ENCODE measurements at regions of chr15 and their contacts with region 1.

Region 1: DNA sequence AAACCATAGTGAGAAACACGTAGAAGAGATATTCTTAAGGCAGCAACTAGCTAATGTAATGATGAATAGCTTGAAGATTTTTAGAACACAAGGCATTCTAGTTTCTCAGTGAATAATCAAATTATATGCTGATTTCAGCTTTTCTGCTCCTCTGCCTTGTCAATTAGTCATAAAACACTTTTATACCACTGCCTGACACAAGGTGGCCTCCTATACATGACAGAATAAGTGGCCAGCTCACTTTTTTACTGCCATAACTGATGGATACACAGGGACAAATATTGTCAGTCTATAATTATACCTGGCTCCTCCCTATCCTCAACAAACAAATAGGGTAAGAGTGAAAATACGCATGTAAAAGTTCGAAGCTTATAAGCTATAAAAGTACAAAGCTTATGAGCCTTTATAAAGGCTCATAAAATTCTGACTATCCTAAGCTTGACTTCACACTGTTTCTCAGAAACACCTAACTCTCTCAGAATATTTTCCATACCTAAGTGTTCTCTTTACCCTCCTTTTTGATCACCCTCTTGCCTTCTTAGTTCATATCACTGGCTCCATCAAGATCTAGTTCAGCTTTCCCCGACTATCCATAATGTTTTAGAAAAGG is 81.6 kb downstream of the HERC1 start:
- DNase-seq: peak; percentile 25 to 41 (median 29)
- H3K4me3 ChIP-seq: no peak overlapping the region
- H3K4me3 Mint-ChIP-seq: no peak overlapping the region
- H3K27ac ChIP-seq: no peak overlapping the region
- H3K27ac Mint-ChIP-seq: peak overlapping the region in 1 of 7 donors; percentile 47
- H3K4me1 ChIP-seq: no peaks in the 10 kb centered on the region
- H3K4me1 Mint-ChIP-seq: no peaks in the 10 kb centered on the region
- H3K27me3 ChIP-seq: no peaks in the 10 kb centered on the region
- H3K27me3 Mint-ChIP-seq: peaks cover 0 to under 1% (median 0%) of the 10 kb centered on the region in 3 donors
- CTCF ChIP-seq: peak; percentile 76

Region 2: DNA sequence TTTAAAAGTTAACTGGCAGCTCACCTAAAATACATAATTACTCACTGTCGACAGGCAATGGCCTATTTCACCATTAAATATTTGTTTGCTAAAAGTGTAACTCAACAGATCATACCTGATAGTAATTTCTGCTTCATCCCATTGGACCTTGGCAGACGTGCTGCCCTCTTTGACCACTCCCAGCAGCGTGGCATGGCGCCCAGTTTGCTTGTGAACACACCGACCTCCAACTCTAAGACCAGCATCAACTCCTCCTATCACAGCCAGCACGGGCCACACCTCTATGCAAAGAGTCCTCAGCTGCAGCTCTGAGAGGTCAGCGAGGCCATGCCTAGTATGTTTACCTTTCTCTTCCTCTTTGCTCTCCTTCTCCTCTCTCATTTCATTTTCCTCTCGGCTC is 74.5 kb before region 1 on chr15:
- intact Hi-C with region 1: no loop called
- DNase-seq: no peak
- H3K4me3 ChIP-seq: no peak overlapping the region
- H3K4me3 Mint-ChIP-seq: no peak overlapping the region
- H3K27ac ChIP-seq: no peak overlapping the region
- H3K27ac Mint-ChIP-seq: peak overlapping the region in 3 of 7 donors; percentile 29 to 39 (median 31)
- H3K4me1 ChIP-seq: no peaks in the 10 kb centered on the region
- H3K4me1 Mint-ChIP-seq: no peaks in the 10 kb centered on the region
- H3K27me3 ChIP-seq: no peaks in the 10 kb centered on the region
- H3K27me3 Mint-ChIP-seq: no peaks in the 10 kb centered on the region
- CTCF ChIP-seq: no peak

Region 3: DNA sequence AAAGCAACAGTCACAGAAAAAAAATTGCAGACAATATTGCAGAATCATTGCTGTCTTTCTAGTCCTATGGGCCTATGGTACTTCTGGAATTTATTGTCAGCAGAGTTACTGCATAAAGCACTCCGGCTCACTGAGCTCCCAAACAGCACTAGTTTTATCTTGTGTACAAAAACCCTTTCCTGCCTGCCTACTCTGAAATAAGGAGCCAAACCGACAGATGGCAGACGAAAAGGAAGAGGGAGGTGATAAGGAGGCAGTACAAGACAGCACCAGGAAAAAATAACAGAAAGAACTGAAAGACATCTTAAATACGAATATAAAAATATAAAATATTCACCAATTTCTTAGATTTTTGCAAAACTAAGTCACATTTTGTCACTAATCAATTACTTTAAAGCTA is 66.0 kb after region 1 on chr15:
- intact Hi-C with region 1: loop called in 1 of 2 experiments (anchors 10 kb)
- DNase-seq: no peak
- H3K4me3 ChIP-seq: no peak overlapping the region
- H3K4me3 Mint-ChIP-seq: no peak overlapping the region
- H3K27ac ChIP-seq: no peak overlapping the region
- H3K27ac Mint-ChIP-seq: peak overlapping the region in 2 of 7 donors; percentile 37 to 60
- H3K4me1 ChIP-seq: peaks cover 18 to 30% of the 10 kb centered on the region in 2 donors
- H3K4me1 Mint-ChIP-seq: peaks cover 52% of the 10 kb centered on the region
- H3K27me3 ChIP-seq: no peaks in the 10 kb centered on the region
- H3K27me3 Mint-ChIP-seq: no peaks in the 10 kb centered on the region
- CTCF ChIP-seq: no peak

Region 4: DNA sequence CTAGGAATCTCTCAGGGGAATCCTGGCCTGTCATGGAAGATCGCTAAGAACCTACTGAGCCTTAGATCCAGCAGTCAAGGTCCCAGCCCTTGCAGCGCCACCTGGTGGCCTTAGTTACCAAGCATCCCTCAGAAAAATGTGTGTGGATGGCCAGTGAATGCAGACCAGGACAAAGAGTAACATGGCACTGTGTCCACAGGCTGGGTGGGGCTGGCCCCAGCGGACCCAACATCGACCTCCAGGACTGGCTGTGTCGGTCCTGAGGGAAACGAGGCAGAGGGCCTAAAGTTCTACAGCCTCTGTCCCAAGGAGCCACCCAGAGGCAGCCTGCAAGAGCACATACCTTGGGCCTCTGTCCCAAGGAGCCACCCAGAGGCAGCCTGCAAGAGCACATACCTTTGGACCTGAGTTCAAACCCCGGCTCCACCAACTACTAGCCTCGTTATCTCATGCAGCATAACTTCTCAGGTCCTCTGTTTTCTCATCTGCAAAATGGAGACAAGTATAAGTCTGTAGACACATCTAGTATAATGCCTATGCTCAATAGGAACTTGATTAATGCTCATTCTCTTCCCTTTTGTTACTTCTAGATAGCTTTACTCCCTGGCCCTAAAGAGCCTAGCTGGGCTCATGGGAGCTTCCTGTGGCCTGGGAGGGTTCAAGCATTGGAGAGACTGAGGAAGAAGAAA is 139.0 kb after region 1 on chr15:
- intact Hi-C with region 1: loop called in 1 of 2 experiments (anchors 2 kb)
- DNase-seq: peak; percentile 60 to 78 (median 76)
- H3K4me3 ChIP-seq: no peak overlapping the region
- H3K4me3 Mint-ChIP-seq: no peak overlapping the region
- H3K27ac ChIP-seq: no peak overlapping the region
- H3K27ac Mint-ChIP-seq: peak overlapping the region in 1 of 7 donors; percentile 26
- H3K4me1 ChIP-seq: peaks cover 52 to 57% of the 10 kb centered on the region in 2 donors
- H3K4me1 Mint-ChIP-seq: peaks cover 56% of the 10 kb centered on the region
- H3K27me3 ChIP-seq: no peaks in the 10 kb centered on the region
- H3K27me3 Mint-ChIP-seq: peaks cover 0 to 7% (median 0%) of the 10 kb centered on the region in 3 donors
- CTCF ChIP-seq: peak; percentile 94

Region 5: GRCh38 chr15:63909819-63910437 is 157.7 kb after region 1 on chr15:
- intact Hi-C with region 1: loop called in 1 of 2 experiments (anchors 10 kb)
- DNase-seq: no peak
- H3K4me3 ChIP-seq: no peak overlapping the region
- H3K4me3 Mint-ChIP-seq: no peak overlapping the region
- H3K27ac ChIP-seq: no peak overlapping the region
- H3K27ac Mint-ChIP-seq: no peak overlapping the region
- H3K4me1 ChIP-seq: peaks cover 16 to 29% of the 10 kb centered on the region in 2 donors
- H3K4me1 Mint-ChIP-seq: peaks cover 20% of the 10 kb centered on the region
- H3K27me3 ChIP-seq: no peaks in the 10 kb centered on the region
- H3K27me3 Mint-ChIP-seq: peaks cover 0 to 8% (median 2%) of the 10 kb centered on the region in 3 donors
- CTCF ChIP-seq: no peak

Region 6: GRCh38 chr15:64067564-64068030 is 315.4 kb after region 1 on chr15:
- intact Hi-C with region 1: loop called (anchors 1 to 5 kb)
- DNase-seq: peak; percentile 50 to 78 (median 70)
- H3K4me3 ChIP-seq: no peak overlapping the region
- H3K4me3 Mint-ChIP-seq: no peak overlapping the region
- H3K27ac ChIP-seq: no peak overlapping the region
- H3K27ac Mint-ChIP-seq: peak overlapping the region in 1 of 7 donors; percentile 36
- H3K4me1 ChIP-seq: peaks cover 28 to 40% of the 10 kb centered on the region in 2 donors
- H3K4me1 Mint-ChIP-seq: peaks cover 40% of the 10 kb centered on the region
- H3K27me3 ChIP-seq: no peaks in the 10 kb centered on the region
- H3K27me3 Mint-ChIP-seq: no peaks in the 10 kb centered on the region
- CTCF ChIP-seq: peak; percentile 89

Region 7: GRCh38 chr15:64153480-64154367 is 401.5 kb after region 1 on chr15:
- intact Hi-C with region 1: loop called in 1 of 2 experiments (anchors 5 kb)
- DNase-seq: peak; percentile 79 to 82 (median 81)
- H3K4me3 ChIP-seq: no peak overlapping the region
- H3K4me3 Mint-ChIP-seq: peak overlapping the region; percentile 58 to 83
- H3K27ac ChIP-seq: peak overlapping the region; percentile 28 to 36
- H3K27ac Mint-ChIP-seq: peak overlapping the region in 5 of 7 donors; percentile 13 to 81 (median 53)
- H3K4me1 ChIP-seq: peaks cover 40 to 49% of the 10 kb centered on the region in 2 donors
- H3K4me1 Mint-ChIP-seq: peaks cover 41% of the 10 kb centered on the region
- H3K27me3 ChIP-seq: peaks cover 17 to 25% of the 10 kb centered on the region in 2 donors
- H3K27me3 Mint-ChIP-seq: peaks cover 24 to 34% (median 29%) of the 10 kb centered on the region in 3 donors
- CTCF ChIP-seq: peak; percentile 95